IMR-90 (cell line): ENCODE measurements at regions of chr3 and their contacts with region 1.

Region 1: GRCh38 chr3:36729204-36730056 is 34.9 kb downstream of the DCLK3 start:
- DNase-seq: peak; percentile 69
- ATAC-seq: peak; percentile 95
- H3K4me3 ChIP-seq: no peak overlapping the region
- H3K27ac ChIP-seq: no peak overlapping the region
- H3K4me1 ChIP-seq: no peaks in the 10 kb centered on the region
- H3K27me3 ChIP-seq: peaks cover 12% of the 10 kb centered on the region
- CTCF ChIP-seq: peak; percentile 86
- POLR2A ChIP-seq: 0 out of 2 replicates have a peak, but pooled peaks have one; percentile 32
- RAD21 ChIP-seq: peak; percentile 90

Region 2: GRCh38 chr3:36674816-36675215 is 54.6 kb before region 1 on chr3:
- CTCF ChIA-PET with region 1: no interaction called
- POLR2A ChIA-PET with region 1: no interaction called
- dilution Hi-C with region 1: no loop called
- in situ Hi-C with region 1: no loop called
- intact Hi-C with region 1: no loop called
- DNase-seq: no peak
- ATAC-seq: no peak
- H3K4me3 ChIP-seq: no peak overlapping the region
- H3K27ac ChIP-seq: no peak overlapping the region
- H3K4me1 ChIP-seq: peaks cover 2% of the 10 kb centered on the region; the same call in 1 of the 2 replicates
- H3K27me3 ChIP-seq: no peaks in the 10 kb centered on the region
- CTCF ChIP-seq: no peak
- POLR2A ChIP-seq: no peak
- RAD21 ChIP-seq: no peak

Region 3: DNA sequence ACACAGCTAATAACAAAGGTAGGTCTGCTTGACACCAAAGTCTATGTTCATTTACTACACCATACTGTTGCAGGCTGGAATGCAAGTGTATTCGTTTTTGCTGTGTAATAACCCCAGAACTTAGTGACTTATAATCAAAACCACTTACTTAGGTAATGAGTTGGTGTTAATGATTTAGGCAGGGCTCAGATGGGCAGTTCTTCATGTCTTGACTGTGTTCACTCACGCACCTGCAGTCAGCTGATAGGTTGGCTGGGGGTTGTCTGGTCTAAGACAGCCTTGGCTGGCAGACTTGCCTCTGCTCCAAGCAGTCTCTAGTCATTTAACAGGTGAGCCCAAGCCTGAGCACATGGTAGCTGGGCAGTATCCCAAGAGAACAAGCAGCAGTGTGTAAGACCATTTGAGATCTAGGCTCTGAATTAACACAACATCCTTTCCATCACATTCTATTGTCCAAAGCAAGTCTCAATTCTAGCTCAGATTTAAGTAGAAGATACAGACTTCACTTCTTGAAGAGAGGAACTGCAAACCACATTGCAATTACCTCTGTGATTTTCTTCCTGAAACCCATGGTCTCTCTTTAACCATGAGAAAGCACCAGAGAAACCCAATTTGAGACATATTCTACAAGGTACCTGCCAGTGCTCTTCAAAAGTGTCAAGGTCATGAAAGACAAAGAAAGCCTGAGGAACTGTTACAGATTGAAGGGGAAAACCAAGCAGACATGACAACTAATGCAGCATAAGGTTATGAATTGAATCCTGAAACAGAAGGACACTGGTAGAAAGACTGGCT is 48.2 kb after region 1 on chr3:
- CTCF ChIA-PET with region 1: no interaction called
- POLR2A ChIA-PET with region 1: no interaction called
- dilution Hi-C with region 1: no loop called
- in situ Hi-C with region 1: no loop called
- intact Hi-C with region 1: no loop called
- DNase-seq: no peak
- ATAC-seq: no peak
- H3K4me3 ChIP-seq: no peak overlapping the region
- H3K27ac ChIP-seq: no peak overlapping the region
- H3K4me1 ChIP-seq: no peaks in the 10 kb centered on the region
- H3K27me3 ChIP-seq: peaks cover 4% of the 10 kb centered on the region
- CTCF ChIP-seq: no peak
- POLR2A ChIP-seq: no peak
- RAD21 ChIP-seq: no peak

Region 4: GRCh38 chr3:36868614-36869436 is 139.4 kb after region 1 on chr3:
- CTCF ChIA-PET with region 1: interaction called, 4 read pairs
- POLR2A ChIA-PET with region 1: no interaction called
- dilution Hi-C with region 1: no loop called
- in situ Hi-C with region 1: loop called (anchors 5 kb)
- intact Hi-C with region 1: loop called (anchors 1 kb)
- DNase-seq: peak; percentile 63
- ATAC-seq: peak; percentile 88
- H3K4me3 ChIP-seq: no peak overlapping the region
- H3K27ac ChIP-seq: no peak overlapping the region
- H3K4me1 ChIP-seq: no peaks in the 10 kb centered on the region
- H3K27me3 ChIP-seq: no peaks in the 10 kb centered on the region
- CTCF ChIP-seq: peak; percentile 70
- POLR2A ChIP-seq: no peak
- RAD21 ChIP-seq: peak; percentile 64

Region 5: DNA sequence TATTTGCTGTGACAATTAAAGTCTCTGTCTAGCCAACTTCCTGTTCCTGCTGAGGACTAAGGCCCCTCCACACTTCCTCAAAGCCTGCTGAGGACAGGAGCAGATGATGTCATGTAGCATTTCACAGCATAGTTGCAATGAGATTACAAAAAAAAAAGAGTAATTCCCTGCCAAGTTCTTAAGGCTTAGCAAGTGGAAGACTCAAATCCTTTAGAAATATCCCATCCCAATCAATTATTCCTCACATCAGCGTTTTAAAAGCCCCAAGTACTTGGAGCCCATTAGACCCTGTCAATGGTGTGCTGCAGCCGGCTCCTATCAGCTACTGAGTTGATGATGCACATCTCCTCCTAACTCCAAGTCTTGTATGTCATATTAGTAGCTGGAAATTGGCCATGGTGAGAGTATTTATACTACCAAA is 163.7 kb after region 1 on chr3:
- CTCF ChIA-PET with region 1: no interaction called
- POLR2A ChIA-PET with region 1: no interaction called
- dilution Hi-C with region 1: no loop called
- in situ Hi-C with region 1: no loop called
- intact Hi-C with region 1: no loop called
- DNase-seq: peak; percentile 76
- ATAC-seq: peak; percentile 79
- H3K4me3 ChIP-seq: no peak overlapping the region
- H3K27ac ChIP-seq: no peak overlapping the region
- H3K4me1 ChIP-seq: no peaks in the 10 kb centered on the region; the same call in 1 of the 2 replicates
- H3K27me3 ChIP-seq: no peaks in the 10 kb centered on the region
- CTCF ChIP-seq: no peak
- POLR2A ChIP-seq: no peak
- RAD21 ChIP-seq: no peak

Region 6: DNA sequence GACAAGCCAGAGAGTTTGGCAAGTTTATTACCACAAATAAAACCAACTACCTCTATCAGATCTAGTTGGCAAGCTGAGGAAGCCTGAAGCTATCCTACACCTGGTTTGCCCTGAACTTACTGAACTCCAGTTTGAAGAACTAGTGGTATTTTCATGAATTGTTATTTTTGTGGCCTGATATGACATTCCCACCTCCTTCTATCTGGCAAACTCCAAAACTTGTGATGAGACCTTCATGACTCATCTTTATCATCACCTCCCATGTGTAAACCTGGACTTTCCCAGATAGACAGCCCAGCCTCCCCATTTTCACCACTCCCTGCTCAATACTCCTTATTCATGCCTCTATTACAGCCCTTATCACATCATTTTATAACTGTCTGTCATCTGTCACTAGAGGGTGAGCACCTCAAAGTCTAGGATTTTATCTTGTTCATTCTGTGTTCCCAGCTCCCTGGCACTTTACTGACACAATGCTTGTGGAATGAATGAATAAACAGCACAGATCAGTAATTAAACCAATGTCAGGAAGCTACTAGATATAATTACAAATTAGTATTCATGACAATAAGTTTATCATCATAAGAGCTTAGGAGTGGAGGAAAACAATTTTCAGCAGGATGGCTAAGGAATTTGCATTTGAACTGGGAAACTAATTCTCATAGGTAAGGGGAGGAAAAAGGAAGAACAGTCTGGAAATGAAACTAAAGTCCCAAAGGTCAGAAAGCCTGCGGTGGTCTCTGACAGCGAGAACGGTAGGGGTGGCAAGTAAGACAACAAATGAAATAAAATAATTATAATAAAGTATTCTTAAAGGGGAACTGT is 228.6 kb after region 1 on chr3:
- CTCF ChIA-PET with region 1: interaction called, 6 read pairs
- POLR2A ChIA-PET with region 1: no interaction called
- dilution Hi-C with region 1: no loop called
- in situ Hi-C with region 1: loop called (anchors 5 kb)
- intact Hi-C with region 1: loop called (anchors 1 kb)
- DNase-seq: peak; percentile 93
- ATAC-seq: peak; percentile 65
- H3K4me3 ChIP-seq: no peak overlapping the region
- H3K27ac ChIP-seq: no peak overlapping the region
- H3K4me1 ChIP-seq: peaks cover 6% of the 10 kb centered on the region; the same call in 1 of the 2 replicates
- H3K27me3 ChIP-seq: no peaks in the 10 kb centered on the region
- CTCF ChIP-seq: no peak
- POLR2A ChIP-seq: no peak
- RAD21 ChIP-seq: no peak

Region 7: DNA sequence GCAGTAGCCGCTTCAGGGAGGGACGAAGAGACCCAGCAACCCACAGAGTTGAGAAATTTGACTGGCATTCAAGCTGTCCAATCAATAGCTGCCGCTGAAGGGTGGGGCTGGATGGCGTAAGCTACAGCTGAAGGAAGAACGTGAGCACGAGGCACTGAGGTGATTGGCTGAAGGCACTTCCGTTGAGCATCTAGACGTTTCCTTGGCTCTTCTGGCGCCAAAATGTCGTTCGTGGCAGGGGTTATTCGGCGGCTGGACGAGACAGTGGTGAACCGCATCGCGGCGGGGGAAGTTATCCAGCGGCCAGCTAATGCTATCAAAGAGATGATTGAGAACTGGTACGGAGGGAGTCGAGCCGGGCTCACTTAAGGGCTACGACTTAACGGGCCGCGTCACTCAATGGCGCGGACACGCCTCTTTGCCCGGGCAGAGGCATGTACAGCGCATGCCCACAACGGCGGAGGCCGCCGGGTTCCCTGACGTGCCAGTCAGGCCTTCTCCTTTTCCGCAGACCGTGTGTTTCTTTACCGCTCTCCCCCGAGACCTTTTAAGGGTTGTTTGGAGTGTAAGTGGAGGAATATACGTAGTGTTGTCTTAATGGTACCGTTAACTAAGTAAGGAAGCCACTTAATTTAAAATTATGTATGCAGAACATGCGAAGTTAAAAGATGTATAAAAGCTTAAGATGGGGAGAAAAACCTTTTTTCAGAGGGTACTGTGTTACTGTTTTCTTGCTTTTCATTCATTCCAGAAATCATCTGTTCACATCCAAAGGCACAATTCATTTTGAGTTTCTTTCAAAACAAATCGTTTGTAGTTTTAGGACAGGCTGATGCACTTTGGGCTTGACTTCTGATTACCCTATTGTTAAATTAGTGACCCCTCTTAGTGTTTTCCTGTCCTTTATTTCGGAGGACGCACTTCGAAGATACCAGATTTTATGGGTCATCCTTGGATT is 264.2 kb after region 1 on chr3 and contains the start of gene MLH1:
- CTCF ChIA-PET with region 1: interaction called, 3 read pairs
- POLR2A ChIA-PET with region 1: no interaction called
- dilution Hi-C with region 1: no loop called
- in situ Hi-C with region 1: no loop called
- intact Hi-C with region 1: loop called (anchors 2 kb)
- DNase-seq: peak; percentile 100
- ATAC-seq: peak; percentile 91
- H3K4me3 ChIP-seq: peak within 1 kb of the TSS; percentile 63
- H3K27ac ChIP-seq: peak within 1 kb of the TSS; percentile 90
- H3K4me1 ChIP-seq: peaks cover 3% of the 10 kb centered on the region; the same call in 1 of the 2 replicates
- H3K27me3 ChIP-seq: no peaks in the 10 kb centered on the region
- CTCF ChIP-seq: no peak
- POLR2A ChIP-seq: peak; percentile 89
- RAD21 ChIP-seq: no peak
- total RNA-seq, gene MLH1: 46.7 and 54.1 TPM in 2 replicates

Region 8: DNA sequence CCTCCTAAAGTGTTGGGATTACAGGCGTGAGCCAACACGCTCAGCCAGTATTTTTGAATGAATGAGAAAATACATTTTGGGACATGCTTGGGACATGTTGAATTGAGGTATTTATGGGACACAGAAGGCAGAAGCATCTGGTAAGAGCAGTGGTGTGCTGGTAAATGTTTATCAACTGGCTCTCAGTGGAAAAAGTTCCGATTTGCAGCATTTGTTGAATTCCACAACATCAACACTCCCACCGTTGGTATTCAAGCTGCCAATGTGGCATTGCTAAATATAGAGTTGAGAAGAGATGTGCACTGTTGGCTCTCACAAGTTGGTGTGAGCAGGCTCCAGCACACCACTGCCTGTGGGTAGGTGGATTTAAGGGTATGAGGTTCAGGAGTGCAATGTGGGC is 480.8 kb after region 1 on chr3:
- CTCF ChIA-PET with region 1: no interaction called
- POLR2A ChIA-PET with region 1: no interaction called
- dilution Hi-C with region 1: no loop called
- in situ Hi-C with region 1: loop called (anchors 25 kb)
- intact Hi-C with region 1: loop called (anchors 2 kb)
- DNase-seq: no peak
- ATAC-seq: peak; percentile 58
- H3K4me3 ChIP-seq: no peak overlapping the region
- H3K27ac ChIP-seq: no peak overlapping the region; the same call in 1 of the 2 replicates
- H3K4me1 ChIP-seq: peaks cover 8% of the 10 kb centered on the region; the same call in 1 of the 2 replicates
- H3K27me3 ChIP-seq: no peaks in the 10 kb centered on the region
- CTCF ChIP-seq: no peak
- POLR2A ChIP-seq: no peak
- RAD21 ChIP-seq: no peak

Region 9: DNA sequence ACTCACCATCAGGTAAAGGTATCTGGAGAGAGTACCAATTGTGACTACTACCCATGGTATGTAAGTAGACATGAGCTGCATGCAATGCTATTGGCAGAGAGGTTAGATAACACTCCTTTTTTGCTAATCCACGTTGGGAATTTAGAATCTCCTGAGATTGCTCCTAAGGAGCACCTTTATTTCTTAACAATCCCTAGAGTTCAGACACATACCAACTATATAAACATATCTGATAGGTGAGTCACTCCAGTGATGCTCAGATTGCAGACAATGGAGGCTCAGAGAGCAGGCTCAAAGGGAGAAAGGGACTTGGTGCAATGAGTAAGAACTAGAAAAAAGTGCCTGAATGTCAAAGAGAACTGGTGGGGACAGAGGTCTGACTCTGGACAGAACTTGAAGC is 492.0 kb after region 1 on chr3:
- CTCF ChIA-PET with region 1: no interaction called
- POLR2A ChIA-PET with region 1: no interaction called
- dilution Hi-C with region 1: no loop called
- in situ Hi-C with region 1: loop called (anchors 25 kb)
- intact Hi-C with region 1: no loop called
- DNase-seq: peak; percentile 88
- ATAC-seq: peak; percentile 75
- H3K4me3 ChIP-seq: no peak overlapping the region
- H3K27ac ChIP-seq: no peak overlapping the region
- H3K4me1 ChIP-seq: peaks cover 6% of the 10 kb centered on the region
- H3K27me3 ChIP-seq: peaks cover 7% of the 10 kb centered on the region
- CTCF ChIP-seq: no peak
- POLR2A ChIP-seq: no peak
- RAD21 ChIP-seq: no peak

Region 10: GRCh38 chr3:37779289-37780152 is 1050.1 kb after region 1 on chr3:
- CTCF ChIA-PET with region 1: no interaction called
- POLR2A ChIA-PET with region 1: no interaction called
- dilution Hi-C with region 1: no loop called
- in situ Hi-C with region 1: no loop called
- intact Hi-C with region 1: loop called (anchors 1 kb)
- DNase-seq: peak; percentile 82
- ATAC-seq: peak; percentile 94
- H3K4me3 ChIP-seq: no peak overlapping the region
- H3K27ac ChIP-seq: no peak overlapping the region
- H3K4me1 ChIP-seq: peaks cover 3% of the 10 kb centered on the region; the same call in 1 of the 2 replicates
- H3K27me3 ChIP-seq: peaks cover 32% of the 10 kb centered on the region
- CTCF ChIP-seq: peak; percentile 84
- POLR2A ChIP-seq: no peak
- RAD21 ChIP-seq: peak; percentile 74